ENCODE measurements at regions of chrX and their contacts with region 1.

Region 1: GRCh38 chrX:51420610-51421009 is 75.8 kb downstream of the NUDT11 start:
- DNase-seq: peak in 1 of 2 donors; percentile 4
- H3K4me3 ChIP-seq: no peak overlapping the region
- H3K27ac ChIP-seq: no peak overlapping the region
- H3K4me1 ChIP-seq: no peaks in the 10 kb centered on the region
- H3K27me3 ChIP-seq: no peaks in the 10 kb centered on the region
- CTCF ChIP-seq: peak; percentile 25 to 55 (median 42)
- POLR2A ChIP-seq: no peak

Region 2: DNA sequence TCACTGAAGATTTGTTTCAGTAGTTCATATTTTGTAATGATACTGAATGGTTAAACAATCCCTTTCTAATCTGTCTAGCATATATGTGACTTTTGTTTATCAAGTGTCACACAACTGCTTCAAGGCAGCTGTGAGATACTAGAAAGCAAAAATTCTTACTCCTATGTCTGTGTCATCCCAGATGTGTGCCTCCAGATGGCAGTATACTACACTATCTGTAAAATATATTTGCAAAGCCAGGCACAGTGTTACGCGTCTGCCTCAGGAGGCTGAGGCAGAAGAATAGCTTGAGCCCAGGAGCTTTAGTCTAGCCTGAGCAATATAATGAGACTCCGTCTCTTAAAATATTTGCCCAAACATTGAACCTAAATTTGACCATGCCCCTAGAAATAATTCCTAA is 84.0 kb before region 1 on chrX:
- intact Hi-C with region 1: loop called (anchors 10 kb)
- DNase-seq: peak; percentile 10 to 14
- H3K4me3 ChIP-seq: no peak overlapping the region
- H3K27ac ChIP-seq: no peak overlapping the region
- H3K4me1 ChIP-seq: no peaks in the 10 kb centered on the region
- H3K27me3 ChIP-seq: no peaks in the 10 kb centered on the region
- CTCF ChIP-seq: peak in 4 of 6 experiments; percentile 21 to 53 (median 42)
- POLR2A ChIP-seq: no peak

Region 3: DNA sequence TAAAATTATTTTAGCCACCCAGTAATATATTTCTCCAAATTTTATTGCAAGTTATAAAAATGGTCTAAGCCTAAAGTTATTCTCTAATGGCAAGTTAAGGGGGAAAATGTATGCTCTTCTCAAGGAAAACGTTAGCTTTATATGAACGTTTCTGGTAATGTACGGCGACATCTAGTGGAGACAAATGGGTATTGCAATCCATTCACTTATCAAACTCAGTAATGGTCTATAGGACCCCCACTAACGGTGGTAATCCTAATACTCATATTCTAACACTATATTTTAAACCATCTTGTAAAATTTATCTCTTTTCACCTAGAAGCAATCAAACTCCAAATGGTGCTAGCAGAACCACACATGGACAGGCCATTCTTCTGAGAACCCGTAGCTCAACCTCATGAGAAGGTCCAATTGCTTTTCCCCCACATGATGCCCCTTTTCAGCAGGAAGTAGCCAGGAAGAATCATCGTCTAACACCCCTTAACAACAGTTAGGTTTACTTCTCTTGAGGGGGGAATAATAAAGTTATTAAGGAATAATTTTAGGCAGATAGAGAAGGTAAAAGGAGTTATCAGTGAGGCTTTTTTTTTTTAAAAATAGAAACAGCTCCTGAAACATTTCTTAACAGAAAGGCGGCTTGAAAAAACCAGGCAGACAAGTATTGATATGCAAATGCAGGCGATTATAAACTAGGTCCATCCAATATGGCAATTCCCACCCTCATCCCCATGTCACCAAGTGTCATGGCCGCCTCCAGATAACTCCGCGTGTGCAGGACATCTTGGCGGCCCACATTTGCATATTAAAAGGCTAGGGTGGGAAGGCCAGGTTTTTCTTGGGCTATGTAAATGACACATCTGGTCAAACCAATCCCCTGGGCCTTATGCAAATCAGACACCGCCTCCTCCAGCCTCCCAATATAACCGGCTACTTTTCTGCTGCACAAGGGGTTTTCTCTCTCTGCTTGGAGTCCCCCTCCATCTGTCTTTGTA is 40.7 kb after region 1 on chrX:
- intact Hi-C with region 1: no loop called
- DNase-seq: no peak
- H3K4me3 ChIP-seq: no peak overlapping the region
- H3K27ac ChIP-seq: no peak overlapping the region
- H3K4me1 ChIP-seq: no peaks in the 10 kb centered on the region
- H3K27me3 ChIP-seq: no peaks in the 10 kb centered on the region
- CTCF ChIP-seq: peak; percentile 6 to 69 (median 61)
- POLR2A ChIP-seq: no peak

Region 4: DNA sequence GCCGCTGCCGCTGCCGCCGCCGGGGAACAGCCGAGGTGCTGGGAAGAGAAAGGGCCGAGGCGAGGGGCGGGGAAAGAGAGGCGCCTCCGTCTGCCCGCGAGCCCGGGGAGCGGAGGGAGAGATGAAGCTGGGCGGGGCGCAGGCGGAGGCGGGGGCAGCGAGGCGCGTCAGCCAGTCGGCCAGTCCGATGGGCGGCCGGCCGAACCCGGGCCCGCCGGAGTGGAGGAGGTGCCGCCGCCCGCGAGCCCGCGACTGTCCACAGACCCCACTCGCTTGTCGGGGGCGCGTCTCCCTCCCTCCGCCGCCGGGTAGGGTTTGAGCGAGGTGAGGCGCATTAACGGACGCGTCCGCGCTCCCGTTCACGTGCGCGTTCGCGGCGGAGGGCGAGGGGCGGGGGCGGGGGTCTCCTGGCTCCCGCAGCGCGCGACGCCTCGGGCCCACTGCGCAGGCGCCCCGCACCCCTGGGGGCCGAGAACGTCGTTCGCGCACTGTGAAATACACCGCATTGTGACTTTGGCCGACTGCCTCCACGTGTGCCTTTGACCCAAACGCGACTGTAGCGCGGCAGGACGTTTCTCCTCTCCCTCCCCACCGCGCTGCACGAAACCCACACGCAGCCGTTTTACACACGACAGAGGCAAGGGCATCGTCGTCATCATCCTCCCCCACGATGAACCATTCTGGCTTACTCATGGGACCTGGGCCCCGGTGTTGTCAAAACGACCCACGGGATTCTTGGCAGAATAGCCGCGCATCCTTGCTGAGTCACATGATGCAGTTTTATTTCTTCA is 76.1 kb after region 1 on chrX and contains the start of gene NUDT11:
- intact Hi-C with region 1: no loop called
- DNase-seq: peak; percentile 41 to 50
- H3K4me3 ChIP-seq: peak within 1 kb of the TSS in 1 of 3 donors; percentile 34
- H3K27ac ChIP-seq: no peak within 1 kb of the TSS
- H3K4me1 ChIP-seq: no peaks in the 10 kb centered on the region
- H3K27me3 ChIP-seq: no peaks in the 10 kb centered on the region
- CTCF ChIP-seq: no peak
- POLR2A ChIP-seq: peak in 1 of 2 donors; percentile 6
- total RNA-seq, gene NUDT11: 0.29 to 1.7 (median 1.4) TPM